Tibial artery (tissue), 4 donors: ENCODE measurements at regions of chr17 and their contacts with region 1.

Region 1: GRCh38 chr17:66275651-66276050 is 26.8 kb upstream of the PRKCA start:
- DNase-seq: peak in 1 of 2 donors; percentile 48
- H3K4me3 ChIP-seq: no peak overlapping the region
- H3K27ac ChIP-seq: no peak overlapping the region
- H3K4me1 ChIP-seq: peaks cover 0 to 25% (median 14%) of the 10 kb centered on the region in 4 donors
- H3K27me3 ChIP-seq: no peaks in the 10 kb centered on the region
- CTCF ChIP-seq: no peak

Region 2: DNA sequence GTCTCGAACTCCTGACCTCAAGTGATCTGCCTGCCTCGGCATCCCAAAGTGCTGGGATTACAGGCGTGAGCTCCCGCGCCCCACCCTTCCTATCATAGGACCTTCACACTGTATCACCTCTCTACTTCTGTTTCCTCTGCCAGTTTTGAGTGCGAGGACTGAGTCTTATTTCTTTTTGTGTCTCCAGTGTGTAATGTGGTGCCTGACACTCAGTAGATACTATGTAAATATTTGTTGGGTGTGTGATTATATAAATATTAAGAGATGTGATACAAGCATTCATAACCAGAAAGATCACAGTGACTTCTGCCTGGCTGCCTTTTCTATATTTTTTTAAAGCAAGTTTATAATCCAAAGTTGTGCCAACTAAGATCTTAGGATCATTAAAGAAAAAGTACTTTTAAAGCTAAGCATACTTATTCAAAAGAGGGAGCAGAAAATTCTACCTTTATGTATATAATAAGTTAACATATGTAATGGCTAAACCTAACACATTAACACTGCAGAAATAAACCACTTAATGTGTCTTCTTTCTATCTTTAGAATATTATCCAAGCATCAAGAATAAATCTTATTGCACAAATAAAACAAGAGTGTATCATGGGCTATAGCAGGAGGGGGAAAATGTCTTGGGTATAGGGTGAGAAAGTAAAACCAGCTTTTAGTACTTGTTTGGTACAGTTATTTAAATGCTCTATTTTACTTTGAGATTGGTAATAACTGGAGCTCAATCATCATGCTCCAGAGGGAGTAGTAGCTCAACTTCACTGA is 37.5 kb after region 1 on chr17:
- intact Hi-C with region 1: loop called (anchors 1 kb)
- DNase-seq: no peak
- H3K4me3 ChIP-seq: no peak overlapping the region
- H3K27ac ChIP-seq: no peak overlapping the region
- H3K4me1 ChIP-seq: peaks cover 0 to 10% (median 0%) of the 10 kb centered on the region in 4 donors
- H3K27me3 ChIP-seq: no peaks in the 10 kb centered on the region
- CTCF ChIP-seq: no peak